HepG2 (cell line): ENCODE measurements at regions of chr4 and their contacts with region 1.

Region 1: DNA sequence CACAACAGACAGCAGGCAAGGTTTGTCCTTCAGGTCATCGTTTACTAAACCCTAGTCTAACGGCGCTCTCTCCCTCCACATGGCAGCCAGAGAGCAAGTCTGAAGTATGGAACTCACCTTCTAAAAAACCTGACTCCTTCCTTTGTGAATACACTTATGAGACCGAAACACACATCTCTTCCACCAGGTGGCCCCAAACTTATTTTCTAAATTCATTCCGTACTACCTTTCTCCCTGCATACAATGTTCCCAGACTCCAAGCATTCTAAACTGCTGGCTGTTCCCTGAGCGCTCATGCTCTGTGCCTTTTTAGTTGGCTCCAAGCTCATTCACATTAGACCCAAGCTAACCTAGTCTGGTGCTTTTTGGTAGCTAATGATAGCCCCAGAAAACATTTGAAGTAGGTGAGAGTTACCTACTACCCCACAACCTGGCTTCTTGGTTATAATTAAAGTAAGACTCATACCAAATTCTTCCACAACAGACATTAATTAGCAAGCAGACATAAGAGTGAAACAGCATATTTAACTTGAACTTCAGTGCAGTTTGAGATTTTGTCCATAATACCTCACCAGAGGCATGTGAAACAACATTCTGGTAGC is 67.6 kb upstream of the DCLK2 start:
- DNase-seq: peak; percentile 41
- ATAC-seq: peak; percentile 90
- H3K4me3 ChIP-seq: no peak overlapping the region
- H3K27ac ChIP-seq: no peak overlapping the region
- H3K4me1 ChIP-seq: no peaks in the 10 kb centered on the region
- H3K27me3 ChIP-seq: no peaks in the 10 kb centered on the region; a peak in 1 of 5 replicates
- CTCF ChIP-seq: peak; percentile 62
- EP300 ChIP-seq: no peak
- POLR2A ChIP-seq: no peak
- RAD21 ChIP-seq: peak; percentile 42; the same call in 1 of the 2 replicates

Region 2: GRCh38 chr4:150090836-150091235 is 80.2 kb after region 1 on chr4:
- CTCF ChIA-PET with region 1: no interaction called
- POLR2A ChIA-PET with region 1: no interaction called
- in situ Hi-C with region 1: no loop called
- intact Hi-C with region 1: no loop called
- DNase-seq: no peak
- ATAC-seq: no peak
- H3K4me3 ChIP-seq: no peak overlapping the region
- H3K27ac ChIP-seq: no peak overlapping the region
- H3K4me1 ChIP-seq: no peaks in the 10 kb centered on the region
- H3K27me3 ChIP-seq: peaks cover 0 to 5% of the 10 kb centered on the region in 2 experiments; a peak in 1 of 5 replicates
- CTCF ChIP-seq: no peak
- EP300 ChIP-seq: no peak
- POLR2A ChIP-seq: no peak
- RAD21 ChIP-seq: no peak

Region 3: GRCh38 chr4:150217192-150217591 is 206.6 kb after region 1 on chr4:
- CTCF ChIA-PET with region 1: no interaction called
- POLR2A ChIA-PET with region 1: no interaction called
- in situ Hi-C with region 1: loop called (anchors 5 kb)
- intact Hi-C with region 1: no loop called
- DNase-seq: peak; percentile 16
- ATAC-seq: peak; percentile 70
- H3K4me3 ChIP-seq: no peak overlapping the region
- H3K27ac ChIP-seq: no peak overlapping the region
- H3K4me1 ChIP-seq: no peaks in the 10 kb centered on the region
- H3K27me3 ChIP-seq: no peaks in the 10 kb centered on the region; a peak in 1 of 5 replicates
- CTCF ChIP-seq: peak; percentile 41
- EP300 ChIP-seq: no peak
- POLR2A ChIP-seq: no peak
- RAD21 ChIP-seq: no peak